ENCODE measurements at regions of chr19 and their contacts with region 1.

Region 1: GRCh38 chr19:43433358-43433673 is 18.6 kb downstream of the TEX101 start:
- DNase-seq: no peak
- ATAC-seq: no peak
- H3K4me3 ChIP-seq: no peak overlapping the region
- H3K27ac ChIP-seq: no peak overlapping the region
- H3K4me1 ChIP-seq: peaks cover 7% of the 10 kb centered on the region
- CTCF ChIP-seq: no peak
- EP300 ChIP-seq: no peak
- POLR2A ChIP-seq: no peak
- RAD21 ChIP-seq: no peak

Region 2: GRCh38 chr19:43148233-43148632 is 285.1 kb before region 1 on chr19:
- CTCF ChIA-PET with region 1: no interaction called
- POLR2A ChIA-PET with region 1: no interaction called
- DNase-seq: no peak
- ATAC-seq: no peak
- H3K4me3 ChIP-seq: no peak overlapping the region
- H3K27ac ChIP-seq: no peak overlapping the region
- H3K4me1 ChIP-seq: peaks cover 13% of the 10 kb centered on the region; the same call in 2 of the 3 replicates
- CTCF ChIP-seq: no peak
- EP300 ChIP-seq: no peak
- POLR2A ChIP-seq: no peak
- RAD21 ChIP-seq: no peak

Region 3: DNA sequence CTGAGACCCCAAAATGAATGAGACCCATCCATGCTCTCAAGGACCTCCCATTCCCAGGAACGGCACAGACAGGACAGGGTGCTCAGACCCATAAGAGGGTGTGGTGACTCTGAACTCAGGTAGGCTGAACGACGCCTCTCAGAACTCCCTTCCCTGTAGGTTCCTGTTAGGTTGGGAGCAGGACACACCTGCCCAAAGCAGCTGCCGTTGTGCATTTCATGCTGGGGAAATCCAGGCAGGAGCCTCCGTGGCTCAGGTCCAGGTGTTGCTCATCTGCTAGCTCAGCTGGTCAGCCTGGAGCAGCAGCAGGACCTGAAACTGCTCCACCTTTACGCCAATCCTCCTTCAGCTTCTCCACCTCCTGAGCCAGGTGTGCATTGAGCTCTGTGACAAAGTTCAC is 37.8 kb before region 1 on chr19:
- CTCF ChIA-PET with region 1: no interaction called
- POLR2A ChIA-PET with region 1: no interaction called
- DNase-seq: no peak
- ATAC-seq: peak in 1 of 2 experiments; percentile 30; a peak in 3 of 6 replicates
- H3K4me3 ChIP-seq: no peak overlapping the region
- H3K27ac ChIP-seq: no peak overlapping the region
- H3K4me1 ChIP-seq: no peaks in the 10 kb centered on the region
- CTCF ChIP-seq: no peak
- EP300 ChIP-seq: no peak
- POLR2A ChIP-seq: no peak
- RAD21 ChIP-seq: no peak

Region 4: GRCh38 chr19:43416951-43417623 is 16.2 kb before region 1 on chr19:
- CTCF ChIA-PET with region 1: interaction called, 17 read pairs
- POLR2A ChIA-PET with region 1: no interaction called
- DNase-seq: no peak
- ATAC-seq: no peak
- H3K4me3 ChIP-seq: no peak overlapping the region
- H3K27ac ChIP-seq: no peak overlapping the region
- H3K4me1 ChIP-seq: no peaks in the 10 kb centered on the region
- CTCF ChIP-seq: no peak
- EP300 ChIP-seq: no peak
- POLR2A ChIP-seq: no peak
- RAD21 ChIP-seq: no peak

Region 5: DNA sequence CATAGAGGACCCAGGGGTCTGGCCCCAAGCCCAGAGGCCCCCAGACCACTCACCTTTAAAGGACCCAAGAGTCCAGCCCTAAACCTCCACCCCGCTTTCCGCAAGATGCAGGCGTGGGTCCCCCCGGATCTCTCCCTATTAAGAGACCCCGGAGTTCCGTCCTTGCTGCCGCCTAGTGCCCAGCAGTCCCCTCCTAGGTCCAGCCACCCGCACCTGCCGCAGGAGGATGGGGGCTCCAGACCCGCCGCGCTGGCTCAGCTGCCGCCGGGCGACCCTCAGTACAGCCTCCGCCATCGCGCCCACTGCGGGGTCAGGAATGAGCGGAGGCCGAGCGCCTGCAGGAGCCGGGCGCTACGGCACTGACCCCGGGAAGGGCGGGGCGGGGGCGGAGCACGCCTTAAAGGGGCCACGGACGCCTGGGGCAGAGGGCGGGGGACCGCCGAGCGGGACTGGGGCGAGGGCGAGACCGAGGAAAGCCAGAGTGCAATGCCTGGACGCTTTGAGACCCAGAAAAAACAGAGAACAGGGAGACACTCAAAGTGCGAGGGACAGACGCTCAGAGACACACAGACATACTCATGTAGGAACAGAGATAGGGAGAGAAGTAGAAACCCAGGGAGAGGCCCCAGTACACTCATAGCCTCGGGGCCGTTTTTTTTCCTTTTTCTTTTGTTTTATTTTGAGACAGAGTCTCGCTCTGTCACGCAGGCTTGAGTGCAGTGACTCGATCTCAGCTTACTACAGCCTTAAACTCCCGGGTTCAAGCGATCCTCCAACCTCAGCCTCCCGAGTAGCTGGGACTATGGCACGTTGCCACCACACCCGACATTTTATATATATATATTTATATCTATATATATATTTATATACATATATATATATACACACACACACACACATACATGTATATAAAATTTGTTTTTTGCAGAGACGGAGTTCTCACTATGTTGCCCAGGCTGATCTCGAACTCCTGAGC is 93.9 kb after region 1 on chr19 and contains the start of gene ETHE1:
- CTCF ChIA-PET with region 1: interaction called, 462 read pairs
- POLR2A ChIA-PET with region 1: no interaction called
- DNase-seq: peak; percentile 62 to 89
- ATAC-seq: peak; percentile 80 to 89
- H3K4me3 ChIP-seq: peak within 1 kb of the TSS; percentile 90
- H3K27ac ChIP-seq: peak within 1 kb of the TSS; percentile 79 to 90
- H3K4me1 ChIP-seq: peaks cover 35% of the 10 kb centered on the region
- CTCF ChIP-seq: no peak
- EP300 ChIP-seq: no peak
- POLR2A ChIP-seq: peak; percentile 96
- RAD21 ChIP-seq: no peak
- polyA plus RNA-seq, gene ETHE1: 58.9 and 75.6 TPM in 2 replicates

Region 6: GRCh38 chr19:43606569-43607229 is 173.4 kb after region 1 on chr19:
- CTCF ChIA-PET with region 1: no interaction called
- POLR2A ChIA-PET with region 1: no interaction called
- DNase-seq: no peak
- ATAC-seq: no peak
- H3K4me3 ChIP-seq: no peak overlapping the region
- H3K27ac ChIP-seq: no peak overlapping the region
- H3K4me1 ChIP-seq: peaks cover 6% of the 10 kb centered on the region; the same call in 2 of the 3 replicates
- CTCF ChIP-seq: no peak
- EP300 ChIP-seq: no peak
- POLR2A ChIP-seq: no peak
- RAD21 ChIP-seq: no peak